ENCODE measurements at regions of chr1 and their contacts with region 1.

Region 1: DNA sequence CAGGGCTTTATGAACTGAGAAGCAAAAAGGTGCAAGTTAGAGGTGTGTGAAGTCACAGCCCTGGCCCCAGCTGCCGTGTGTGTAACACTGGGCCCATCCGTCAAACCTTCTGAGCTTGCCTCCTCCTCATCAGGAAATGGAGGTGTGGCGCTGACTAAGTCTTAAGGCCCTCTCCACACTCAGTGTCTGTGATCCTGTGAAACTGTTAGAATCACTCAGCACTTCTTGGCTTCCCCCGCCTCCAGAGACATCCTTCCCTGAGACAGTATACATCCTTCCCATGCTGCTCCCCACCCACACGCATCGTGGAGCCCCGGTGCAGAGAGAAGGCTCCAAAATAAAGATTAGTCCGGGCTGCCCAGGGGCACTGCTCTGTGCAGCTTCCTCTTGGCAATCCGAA is 33.3 kb downstream of the LRP8 start:
- DNase-seq: no peak
- H3K4me3 ChIP-seq: no peak overlapping the region
- H3K27ac ChIP-seq: no peak overlapping the region
- H3K4me1 ChIP-seq: peaks cover 24% of the 10 kb centered on the region
- H3K27me3 ChIP-seq: no peaks in the 10 kb centered on the region
- CTCF ChIP-seq: no peak
- POLR2A ChIP-seq: no peak

Region 2: GRCh38 chr1:53315456-53316423 is 21.2 kb after region 1 on chr1:
- CTCF ChIA-PET with region 1: interaction called, 3 read pairs
- POLR2A ChIA-PET with region 1: no interaction called
- dilution Hi-C with region 1: no loop called
- intact Hi-C with region 1: loop called (anchors 1 kb)
- DNase-seq: no peak
- H3K4me3 ChIP-seq: no peak overlapping the region
- H3K27ac ChIP-seq: no peak overlapping the region
- H3K4me1 ChIP-seq: no peaks in the 10 kb centered on the region
- H3K27me3 ChIP-seq: no peaks in the 10 kb centered on the region
- CTCF ChIP-seq: no peak
- POLR2A ChIP-seq: no peak

Region 3: GRCh38 chr1:53521924-53522552 is 227.5 kb after region 1 on chr1:
- CTCF ChIA-PET with region 1: no interaction called
- POLR2A ChIA-PET with region 1: no interaction called
- dilution Hi-C with region 1: no loop called
- intact Hi-C with region 1: no loop called
- DNase-seq: no peak
- H3K4me3 ChIP-seq: no peak overlapping the region
- H3K27ac ChIP-seq: no peak overlapping the region
- H3K4me1 ChIP-seq: no peaks in the 10 kb centered on the region
- H3K27me3 ChIP-seq: no peaks in the 10 kb centered on the region
- CTCF ChIP-seq: no peak
- POLR2A ChIP-seq: no peak

Measured in endothelial cell of umbilical vein (primary cell).